ENCODE measurements at regions of chr7 and their contacts with region 1.

Region 1: GRCh38 chr7:91784463-91784862 is 96.0 kb downstream of the MTERF1 start:
- DNase-seq: peak; percentile 53
- H3K4me3 ChIP-seq: no peak overlapping the region
- H3K27ac ChIP-seq: no peak overlapping the region
- H3K4me1 ChIP-seq: no peaks in the 10 kb centered on the region
- H3K27me3 ChIP-seq: no peaks in the 10 kb centered on the region
- CTCF ChIP-seq: peak; percentile 32 to 47

Region 2: DNA sequence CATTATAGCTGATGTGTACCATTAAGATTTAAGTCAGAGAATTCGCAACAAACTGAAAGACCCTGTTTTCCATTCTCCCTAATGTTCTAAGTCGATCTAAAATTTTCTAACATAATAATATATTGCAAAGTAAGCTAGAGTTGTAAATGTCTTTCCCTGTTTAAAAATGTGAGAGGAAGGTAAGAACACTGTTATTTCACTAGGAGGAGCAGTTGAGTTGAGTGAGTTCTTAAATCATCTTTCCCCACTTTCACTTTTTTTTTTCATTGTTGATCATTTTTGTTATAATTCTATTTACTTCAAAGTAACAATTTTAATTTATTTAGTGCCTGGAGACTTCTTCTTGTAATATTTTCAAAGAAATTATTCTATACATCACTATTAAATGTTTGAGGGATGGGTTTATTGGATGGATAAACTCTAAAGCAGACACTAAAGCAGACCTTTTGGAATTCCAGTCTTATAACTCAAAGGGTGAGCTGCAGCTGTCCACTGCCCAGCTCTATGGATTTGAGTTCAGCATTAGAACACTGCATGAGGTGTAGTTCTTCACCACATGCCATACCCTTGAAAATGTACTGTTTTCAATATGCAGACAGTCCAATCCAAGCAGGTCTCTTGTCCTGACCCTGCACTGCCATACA is 701.5 kb before region 1 on chr7:
- CTCF ChIA-PET with region 1: no interaction called
- dilution Hi-C with region 1: no loop called
- in situ Hi-C with region 1: loop called (anchors 5 to 25 kb)
- intact Hi-C with region 1: loop called (anchors 2 kb)
- DNase-seq: no peak
- H3K4me3 ChIP-seq: no peak overlapping the region
- H3K27ac ChIP-seq: no peak overlapping the region
- H3K4me1 ChIP-seq: no peaks in the 10 kb centered on the region
- H3K27me3 ChIP-seq: no peaks in the 10 kb centered on the region
- CTCF ChIP-seq: peak; percentile 53 to 61

Region 3: GRCh38 chr7:91288208-91288824 is 496.1 kb before region 1 on chr7:
- CTCF ChIA-PET with region 1: no interaction called
- dilution Hi-C with region 1: no loop called
- in situ Hi-C with region 1: no loop called
- intact Hi-C with region 1: loop called (anchors 1 kb)
- DNase-seq: peak; percentile 12
- H3K4me3 ChIP-seq: no peak overlapping the region
- H3K27ac ChIP-seq: no peak overlapping the region
- H3K4me1 ChIP-seq: no peaks in the 10 kb centered on the region
- H3K27me3 ChIP-seq: peaks cover 2% of the 10 kb centered on the region
- CTCF ChIP-seq: peak; percentile 63 to 68

Measured in mammary epithelial cell (primary cell).